RWPE1 (cell line): ENCODE measurements at regions of chr13 and their contacts with region 1.

Region 1: GRCh38 chr13:21130116-21130515 is 46.2 kb downstream of the SKA3 start:
- DNase-seq: no peak
- H3K27ac ChIP-seq: no peak overlapping the region
- CTCF ChIP-seq: no peak

Region 2: GRCh38 chr13:20924758-20925394 is 205.2 kb before region 1 on chr13:
- CTCF ChIA-PET with region 1: interaction called, 11 read pairs
- POLR2A ChIA-PET with region 1: no interaction called
- DNase-seq: peak; percentile 13
- H3K27ac ChIP-seq: no peak overlapping the region
- CTCF ChIP-seq: peak; percentile 84

Region 3: DNA sequence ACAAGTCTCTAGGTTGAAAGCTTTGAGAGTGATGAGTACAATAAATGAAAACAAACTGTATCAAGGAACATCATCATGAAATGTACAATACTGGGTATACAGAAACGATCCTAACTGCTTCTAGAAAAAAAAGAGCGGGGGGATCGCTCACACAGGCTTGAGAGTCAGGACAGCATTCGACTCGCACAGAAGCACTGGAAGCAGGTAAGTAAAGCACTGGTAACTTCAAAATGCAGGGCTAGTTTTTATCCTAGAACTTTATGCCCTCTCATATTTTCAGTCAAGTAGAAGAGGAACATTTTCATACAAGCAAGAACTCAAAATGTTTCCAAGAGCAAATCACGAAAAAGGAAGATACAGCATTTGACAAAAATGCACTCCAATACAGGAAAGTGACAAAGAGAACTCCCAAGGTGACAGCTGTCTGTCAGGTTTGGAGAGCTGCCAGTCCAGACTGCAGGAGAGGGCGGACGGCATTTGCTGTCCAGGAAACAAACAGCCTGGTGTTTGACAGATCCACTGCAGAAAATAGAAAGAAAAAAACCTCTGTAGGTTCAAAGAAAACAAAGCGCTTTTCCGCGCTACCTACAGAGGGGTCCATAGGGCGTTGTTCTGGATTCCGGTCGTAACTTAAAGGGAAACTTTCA is 169.3 kb before region 1 on chr13:
- CTCF ChIA-PET with region 1: no interaction called
- POLR2A ChIA-PET with region 1: no interaction called
- DNase-seq: no peak
- H3K27ac ChIP-seq: no peak overlapping the region
- CTCF ChIP-seq: no peak

Region 4: DNA sequence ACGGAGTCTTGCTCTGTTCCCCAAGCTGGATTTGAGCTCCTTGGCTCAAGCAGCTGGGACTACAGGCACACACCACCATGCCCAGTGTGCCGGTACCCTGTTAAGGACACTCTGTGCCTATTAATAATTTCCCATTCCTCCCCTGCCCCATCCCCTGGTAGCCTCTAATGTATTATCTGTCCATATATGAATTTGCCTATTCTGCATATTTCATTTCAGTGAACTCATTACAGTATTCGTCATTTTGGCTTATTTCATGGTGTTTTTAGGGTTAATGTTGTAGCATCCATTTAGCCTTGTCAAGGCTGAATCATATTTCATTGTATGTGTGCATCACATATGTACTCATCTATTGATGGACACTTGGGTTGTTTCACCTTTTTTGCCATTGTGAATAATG is 12.7 kb after region 1 on chr13:
- CTCF ChIA-PET with region 1: no interaction called
- POLR2A ChIA-PET with region 1: no interaction called
- DNase-seq: no peak
- H3K27ac ChIP-seq: no peak overlapping the region
- CTCF ChIP-seq: no peak